ENCODE measurements at regions of chr17 and their contacts with region 1.

Region 1: GRCh38 chr17:69609473-69610305 is 195.2 kb downstream of the MAP2K6 start:
- DNase-seq: no peak

Region 2: GRCh38 chr17:69198238-69198637 is 411.5 kb before region 1 on chr17:
- intact Hi-C with region 1: no loop called
- DNase-seq: no peak

Region 3: DNA sequence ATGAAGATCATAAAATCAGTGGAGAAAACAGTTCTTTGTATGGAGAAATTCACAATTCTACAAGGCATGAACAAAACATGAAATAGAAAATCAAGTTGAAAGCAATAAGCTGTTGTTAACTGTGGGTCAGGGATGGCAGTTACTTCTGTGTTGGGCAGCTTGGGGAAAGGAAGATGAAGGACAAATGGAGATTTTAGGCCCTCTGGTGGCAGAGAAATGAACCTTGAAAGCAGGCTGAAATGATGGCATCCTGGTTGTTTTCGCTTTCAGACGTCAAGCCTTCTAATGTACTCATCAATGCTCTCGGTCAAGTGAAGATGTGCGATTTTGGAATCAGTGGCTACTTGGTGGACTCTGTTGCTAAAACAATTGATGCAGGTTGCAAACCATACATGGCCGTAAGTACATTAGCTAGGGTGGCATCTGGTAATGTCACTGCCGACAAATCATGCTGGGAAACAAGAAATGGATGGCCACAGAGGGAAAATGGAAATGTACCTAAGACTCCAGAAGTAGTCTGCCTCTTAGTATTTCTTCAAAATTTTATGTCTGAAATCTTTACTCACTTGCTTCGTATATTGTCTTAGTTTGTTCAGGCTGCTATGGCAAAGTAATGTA is 86.3 kb before region 1 on chr17:
- intact Hi-C with region 1: no loop called
- DNase-seq: no peak

Region 4: DNA sequence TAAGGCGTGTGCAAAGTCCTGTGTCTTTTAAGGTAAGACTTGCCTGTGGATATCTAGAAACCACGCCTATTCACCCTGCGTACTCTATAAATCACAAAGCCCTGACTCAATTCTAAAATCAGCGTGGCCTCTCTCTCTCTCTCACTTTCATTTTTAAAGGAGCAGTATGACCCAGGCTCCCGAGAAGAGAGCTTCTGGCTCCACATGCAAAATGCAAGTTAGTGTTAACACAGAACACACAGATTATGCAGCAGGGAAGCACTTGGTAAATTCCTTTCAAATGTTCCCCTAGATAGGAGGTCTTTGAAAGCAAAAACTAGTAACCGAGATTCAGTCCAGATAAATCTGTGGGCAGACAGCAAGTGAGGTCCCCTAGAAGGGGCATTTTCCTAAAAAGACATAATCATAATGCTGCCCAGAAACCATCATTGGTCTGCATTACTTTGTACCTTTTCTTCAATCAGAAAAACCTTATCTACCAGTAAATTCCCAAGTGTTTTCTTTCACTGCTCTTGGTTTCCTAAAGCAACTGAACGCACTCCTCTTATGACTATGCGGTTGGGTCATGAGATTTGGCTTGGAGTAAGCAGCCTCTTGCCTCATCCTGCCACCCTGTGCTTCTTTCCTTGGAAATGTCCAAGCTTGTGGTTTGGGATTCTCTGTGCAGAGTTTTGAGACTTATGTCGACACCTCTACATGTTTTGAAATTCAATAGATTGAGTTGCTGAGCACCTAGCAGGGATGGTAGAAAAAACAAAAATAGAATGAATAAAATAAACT is 528.0 kb after region 1 on chr17:
- intact Hi-C with region 1: loop called (anchors 2 kb)
- DNase-seq: no peak

Measured in cardiac septum (tissue), 1 donor.